Activated CD8-positive, alpha-beta memory T cell treated with anti-CD3 and anti-CD28 coated beads, Interleukin-2, amount 10 ng/mL, durations not matched to agents 7 days and 5 days (primary cell): ENCODE measurements at regions of chr21 and their contacts with region 1.

Region 1: GRCh38 chr21:41816220-41817165 is 49.6 kb upstream of the RIPK4 start:
- DNase-seq: peak; percentile 64
- ATAC-seq: peak; percentile 77
- H3K4me3 Mint-ChIP-seq: no peak overlapping the region
- H3K27ac Mint-ChIP-seq: no peak overlapping the region
- H3K4me1 Mint-ChIP-seq: peaks cover 1% of the 10 kb centered on the region
- H3K27me3 Mint-ChIP-seq: no peaks in the 10 kb centered on the region

Region 2: DNA sequence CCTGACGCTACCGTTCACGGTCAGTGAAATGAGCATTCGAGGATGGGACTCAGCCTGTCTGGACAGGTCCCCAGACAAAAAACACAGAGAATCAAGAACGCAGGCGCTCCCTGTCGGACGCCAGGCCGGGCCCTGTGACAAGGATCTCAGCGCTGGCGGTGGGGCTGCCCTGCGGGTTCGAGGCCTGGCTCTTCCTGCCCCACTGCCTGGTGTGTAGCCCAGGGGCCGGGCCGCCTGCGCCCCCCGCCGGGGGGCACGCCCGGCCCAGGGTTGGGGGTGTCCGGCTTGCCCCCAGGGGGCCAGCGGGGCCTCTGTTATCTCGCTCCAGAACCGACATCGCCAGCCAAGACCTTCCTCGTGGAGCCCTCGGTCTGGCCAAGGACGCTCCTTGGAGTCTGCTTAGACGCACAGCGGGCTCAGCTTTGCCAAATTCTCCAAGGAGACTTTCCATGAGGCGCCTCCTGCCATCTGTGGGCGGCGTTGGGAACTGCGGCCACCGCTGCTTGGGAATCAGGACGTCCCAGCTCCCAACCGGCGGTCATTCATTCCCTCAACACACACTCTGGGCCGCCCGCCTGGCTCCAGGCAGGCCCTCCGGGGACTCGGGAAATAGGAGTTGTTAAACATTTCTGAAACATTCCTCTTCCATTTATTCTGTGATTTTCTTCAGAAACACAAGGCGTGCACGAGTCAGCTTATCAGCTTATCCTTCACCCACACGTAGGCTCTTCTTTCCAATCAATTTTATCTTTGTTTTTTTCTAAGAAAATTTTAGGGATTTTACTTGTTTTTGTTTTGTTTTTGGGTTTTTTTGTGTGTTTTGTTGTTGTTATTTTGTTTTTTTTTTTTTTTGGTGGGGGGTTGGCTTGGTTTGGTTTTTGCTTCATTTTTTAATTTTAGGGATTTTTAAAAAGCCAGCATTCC is 38.3 kb before region 1 on chr21:
- CTCF ChIA-PET with region 1: no interaction called
- DNase-seq: no peak
- ATAC-seq: peak; percentile 27
- H3K4me3 Mint-ChIP-seq: no peak overlapping the region
- H3K27ac Mint-ChIP-seq: no peak overlapping the region
- H3K4me1 Mint-ChIP-seq: no peaks in the 10 kb centered on the region
- H3K27me3 Mint-ChIP-seq: peaks cover 56% of the 10 kb centered on the region

Region 3: DNA sequence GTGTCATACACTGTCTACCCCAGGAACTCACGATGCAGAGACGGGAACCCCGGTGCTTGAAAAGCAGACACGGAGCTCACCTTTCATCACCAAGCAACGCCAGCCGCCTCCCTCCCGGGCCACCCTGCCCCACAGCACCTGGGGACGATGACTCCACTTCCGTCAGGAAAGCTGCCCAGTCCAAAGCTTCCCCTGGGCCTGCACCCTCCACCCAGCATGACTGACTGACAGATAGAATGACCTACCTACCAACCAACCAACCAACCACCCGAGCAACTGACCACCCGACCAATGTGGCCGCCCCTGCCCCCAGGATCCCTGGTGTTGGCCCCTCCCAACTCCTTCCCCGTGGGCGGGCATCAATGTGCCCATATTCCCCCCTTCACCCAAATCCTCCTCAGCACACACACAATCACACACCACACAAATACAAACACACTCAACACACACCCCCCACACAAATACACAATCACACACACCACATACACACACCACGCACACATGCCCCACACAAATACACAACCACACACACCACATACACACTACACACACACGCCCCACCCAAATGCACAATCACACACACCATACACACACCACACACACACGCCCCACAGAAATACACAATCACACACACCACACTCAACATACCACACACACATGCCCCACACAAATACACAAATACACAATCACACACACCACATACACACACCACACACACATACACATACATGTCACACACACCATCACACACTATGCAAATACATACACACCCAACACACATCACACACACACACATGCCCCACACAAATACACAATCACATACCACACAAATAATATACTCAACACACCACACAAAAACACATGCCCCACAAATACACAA is 12.2 kb after region 1 on chr21:
- CTCF ChIA-PET with region 1: interaction called, 11 read pairs
- DNase-seq: no peak
- ATAC-seq: no peak
- H3K4me3 Mint-ChIP-seq: no peak overlapping the region
- H3K27ac Mint-ChIP-seq: no peak overlapping the region
- H3K4me1 Mint-ChIP-seq: no peaks in the 10 kb centered on the region
- H3K27me3 Mint-ChIP-seq: no peaks in the 10 kb centered on the region